ENCODE measurements at regions of chr1 and their contacts with region 1.

Region 1: DNA sequence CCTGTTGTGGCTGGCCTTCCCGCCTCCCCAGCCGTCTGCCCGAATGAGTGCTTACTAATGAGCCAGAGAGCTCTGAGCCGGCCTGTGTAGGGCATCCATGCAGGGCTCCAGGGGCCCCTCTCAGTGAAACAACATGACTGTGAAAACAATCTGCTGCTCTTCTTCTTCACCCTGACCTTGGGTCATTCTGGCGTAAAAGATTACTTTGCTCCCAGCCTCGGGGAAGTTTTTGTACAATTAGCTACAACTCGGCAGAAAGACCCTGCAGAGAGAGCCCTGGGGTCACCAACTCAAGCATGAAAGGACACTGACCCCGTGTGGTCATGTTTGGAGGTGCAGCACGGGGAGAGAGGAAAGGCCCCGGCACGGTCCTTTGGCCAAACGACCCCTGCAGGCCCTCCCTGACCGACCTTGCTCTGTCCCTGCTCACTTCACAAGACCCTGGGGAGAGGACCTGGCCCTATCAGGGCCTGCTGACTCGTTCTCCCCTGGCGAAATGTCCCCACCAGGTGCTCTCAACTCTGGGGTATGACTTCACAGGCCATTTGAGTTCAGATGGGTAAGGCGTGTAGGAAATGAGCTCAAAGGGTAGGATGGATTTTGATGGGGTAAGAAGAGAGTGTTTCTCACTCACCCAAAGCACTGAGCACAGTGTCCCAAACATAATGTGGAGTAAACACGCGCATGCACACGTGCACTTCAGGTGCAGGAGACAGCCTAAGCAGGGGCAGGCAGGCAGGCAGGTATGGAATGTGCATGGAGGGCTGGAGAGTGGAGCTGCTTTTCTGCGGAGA is 22.9 kb upstream of the FAM20B start:
- DNase-seq: peak; percentile 37 to 92 (median 77)

Region 2: GRCh38 chr1:178532392-178532791 is 470.4 kb before region 1 on chr1:
- intact Hi-C with region 1: loop called (anchors 10 kb)
- DNase-seq: peak; percentile 55 to 96 (median 90)

Region 3: GRCh38 chr1:178768423-178768822 is 234.3 kb before region 1 on chr1:
- intact Hi-C with region 1: loop called (anchors 10 kb)
- DNase-seq: peak in 6 of 42 donors; percentile 10 to 35 (median 14)